Calu3 (cell line): ENCODE measurements at regions of chr4 and their contacts with region 1.

Region 1: DNA sequence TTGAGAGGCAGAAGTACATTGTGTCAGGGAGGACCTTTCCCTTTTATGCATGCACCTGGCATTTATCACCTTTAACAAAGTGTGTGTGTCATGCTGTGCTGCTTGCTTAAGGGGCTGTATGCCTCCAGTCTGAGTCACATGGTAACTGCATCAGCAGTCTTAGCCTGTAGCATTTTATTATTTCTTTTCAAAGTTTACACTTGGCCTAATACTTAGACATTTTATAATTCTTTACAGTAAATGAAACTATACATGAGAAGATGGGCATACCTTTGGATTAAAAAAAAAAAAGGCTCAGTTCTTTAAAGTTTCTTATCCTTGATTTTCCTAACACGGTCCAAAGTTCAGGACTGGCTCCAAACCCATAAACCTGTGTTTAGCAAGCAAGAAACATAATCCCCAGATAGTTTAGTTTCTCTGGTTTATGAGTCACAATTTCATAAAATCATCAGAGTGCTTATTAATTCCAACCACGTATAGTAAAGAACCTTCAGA is 14.6 kb downstream of the NPNT start:
- DNase-seq: peak; percentile 28
- H3K4me3 Mint-ChIP-seq: no peak overlapping the region
- H3K27ac Mint-ChIP-seq: peak overlapping the region; percentile 76
- H3K4me1 Mint-ChIP-seq: peaks cover 12% of the 10 kb centered on the region
- H3K27me3 Mint-ChIP-seq: no peaks in the 10 kb centered on the region
- CTCF ChIP-seq: no peak

Region 2: DNA sequence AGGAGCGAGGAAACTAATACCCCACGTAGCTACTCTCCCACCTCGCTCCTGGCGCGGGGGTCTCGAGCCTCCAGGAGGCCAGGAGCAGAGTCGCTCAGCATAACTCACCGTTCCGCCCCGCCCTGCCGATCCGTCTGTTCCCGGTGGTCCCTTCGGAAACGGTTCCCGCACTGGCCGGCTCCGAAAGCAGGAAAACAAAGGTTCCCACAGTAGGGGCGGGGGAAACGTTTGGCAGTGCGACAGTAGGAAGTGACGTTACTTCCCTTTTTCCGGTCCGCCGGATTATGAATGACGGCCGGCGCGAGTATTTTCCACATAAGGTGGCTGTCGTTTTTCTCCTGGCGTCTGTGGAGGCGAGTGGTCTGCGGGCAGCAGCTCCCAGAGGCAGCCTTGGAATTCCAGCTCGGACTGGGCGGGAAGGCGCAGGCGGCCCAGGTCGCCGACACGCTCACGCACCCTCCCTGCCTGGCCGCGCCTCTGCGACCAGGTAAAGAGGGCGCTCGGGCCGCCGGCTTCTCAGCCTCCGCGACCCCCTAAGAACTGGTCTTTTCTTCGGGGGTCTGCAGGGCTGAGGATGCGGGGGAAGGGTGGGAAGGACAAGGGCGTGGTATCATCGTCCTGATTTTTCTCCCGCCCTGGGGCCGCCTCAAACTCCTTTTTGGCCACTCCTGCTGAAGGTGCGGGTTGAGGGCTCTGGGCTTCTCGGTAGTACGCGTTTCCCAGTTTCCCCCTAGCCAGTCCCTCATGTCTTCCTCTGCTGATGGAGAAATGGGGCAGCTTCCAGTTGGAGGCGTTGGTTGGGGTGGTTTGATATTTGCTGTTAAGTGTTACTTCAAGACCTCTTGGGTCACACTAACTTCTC is 201.1 kb before region 1 on chr4 and contains the starts of genes GSTCD and INTS12:
- CTCF ChIA-PET with region 1: no interaction called
- intact Hi-C with region 1: no loop called
- DNase-seq: peak; percentile 87
- H3K4me3 Mint-ChIP-seq: peak within 1 kb of the TSS; percentile 93
- H3K27ac Mint-ChIP-seq: peak within 1 kb of the TSS; percentile 87
- H3K4me1 Mint-ChIP-seq: peaks cover 32% of the 10 kb centered on the region
- H3K27me3 Mint-ChIP-seq: no peaks in the 10 kb centered on the region
- CTCF ChIP-seq: no peak
- total RNA-seq, gene GSTCD: 22.5 and 23.9 TPM in 2 replicates
- total RNA-seq, gene INTS12: 11.8 and 13.4 TPM in 2 replicates

Region 3: GRCh38 chr4:105840426-105841174 is 69.2 kb before region 1 on chr4:
- CTCF ChIA-PET with region 1: no interaction called
- intact Hi-C with region 1: no loop called
- DNase-seq: no peak
- H3K4me3 Mint-ChIP-seq: no peak overlapping the region
- H3K27ac Mint-ChIP-seq: no peak overlapping the region
- H3K4me1 Mint-ChIP-seq: no peaks in the 10 kb centered on the region
- H3K27me3 Mint-ChIP-seq: no peaks in the 10 kb centered on the region
- CTCF ChIP-seq: no peak

Region 4: DNA sequence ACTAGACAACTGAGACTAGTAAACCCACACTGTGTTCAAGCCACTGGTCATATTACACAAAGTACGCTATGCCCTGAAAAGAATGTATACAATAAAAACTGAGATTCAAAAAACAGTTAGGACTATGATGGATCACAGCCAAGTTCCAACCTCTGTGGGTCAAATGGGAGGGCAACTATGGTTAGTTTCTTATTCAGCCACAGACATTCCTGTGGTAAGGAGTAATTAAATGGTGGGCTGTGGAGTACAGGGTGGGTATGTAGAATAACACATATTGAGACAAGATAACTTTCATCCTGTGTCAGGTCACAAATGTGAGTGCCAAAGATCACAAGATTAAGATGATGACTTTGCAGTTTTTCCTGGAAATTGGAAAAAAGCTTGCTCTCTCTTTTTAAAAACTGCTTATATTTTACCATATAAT is 152.6 kb after region 1 on chr4:
- CTCF ChIA-PET with region 1: no interaction called
- intact Hi-C with region 1: loop called (anchors 5 kb)
- DNase-seq: peak; percentile 20
- H3K4me3 Mint-ChIP-seq: no peak overlapping the region
- H3K27ac Mint-ChIP-seq: no peak overlapping the region
- H3K4me1 Mint-ChIP-seq: peaks cover 23% of the 10 kb centered on the region
- H3K27me3 Mint-ChIP-seq: no peaks in the 10 kb centered on the region
- CTCF ChIP-seq: no peak

Region 5: DNA sequence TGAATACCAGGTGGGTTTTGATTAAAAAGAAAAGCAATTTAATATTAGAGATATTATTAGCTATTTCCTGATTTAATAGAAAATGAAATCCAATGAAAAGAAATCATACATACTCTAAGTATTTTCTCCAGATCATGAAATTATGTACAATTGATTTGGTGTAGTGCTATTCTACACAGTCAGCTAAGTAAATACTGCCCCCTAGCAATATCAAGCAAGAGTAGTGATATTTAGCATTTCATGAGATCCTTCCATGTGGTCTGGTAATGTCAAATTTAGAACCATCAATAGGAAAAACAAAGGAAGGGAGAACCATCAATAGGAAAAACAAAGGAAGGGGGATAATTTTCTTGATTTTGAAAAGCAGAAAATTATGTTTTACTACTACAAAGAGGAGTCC is 291.5 kb after region 1 on chr4:
- CTCF ChIA-PET with region 1: no interaction called
- intact Hi-C with region 1: loop called (anchors 10 kb)
- DNase-seq: no peak
- H3K4me3 Mint-ChIP-seq: no peak overlapping the region
- H3K27ac Mint-ChIP-seq: no peak overlapping the region
- H3K4me1 Mint-ChIP-seq: no peaks in the 10 kb centered on the region
- H3K27me3 Mint-ChIP-seq: no peaks in the 10 kb centered on the region
- CTCF ChIP-seq: no peak